ENCODE measurements at regions of chr16 and their contacts with region 1.

Region 1: DNA sequence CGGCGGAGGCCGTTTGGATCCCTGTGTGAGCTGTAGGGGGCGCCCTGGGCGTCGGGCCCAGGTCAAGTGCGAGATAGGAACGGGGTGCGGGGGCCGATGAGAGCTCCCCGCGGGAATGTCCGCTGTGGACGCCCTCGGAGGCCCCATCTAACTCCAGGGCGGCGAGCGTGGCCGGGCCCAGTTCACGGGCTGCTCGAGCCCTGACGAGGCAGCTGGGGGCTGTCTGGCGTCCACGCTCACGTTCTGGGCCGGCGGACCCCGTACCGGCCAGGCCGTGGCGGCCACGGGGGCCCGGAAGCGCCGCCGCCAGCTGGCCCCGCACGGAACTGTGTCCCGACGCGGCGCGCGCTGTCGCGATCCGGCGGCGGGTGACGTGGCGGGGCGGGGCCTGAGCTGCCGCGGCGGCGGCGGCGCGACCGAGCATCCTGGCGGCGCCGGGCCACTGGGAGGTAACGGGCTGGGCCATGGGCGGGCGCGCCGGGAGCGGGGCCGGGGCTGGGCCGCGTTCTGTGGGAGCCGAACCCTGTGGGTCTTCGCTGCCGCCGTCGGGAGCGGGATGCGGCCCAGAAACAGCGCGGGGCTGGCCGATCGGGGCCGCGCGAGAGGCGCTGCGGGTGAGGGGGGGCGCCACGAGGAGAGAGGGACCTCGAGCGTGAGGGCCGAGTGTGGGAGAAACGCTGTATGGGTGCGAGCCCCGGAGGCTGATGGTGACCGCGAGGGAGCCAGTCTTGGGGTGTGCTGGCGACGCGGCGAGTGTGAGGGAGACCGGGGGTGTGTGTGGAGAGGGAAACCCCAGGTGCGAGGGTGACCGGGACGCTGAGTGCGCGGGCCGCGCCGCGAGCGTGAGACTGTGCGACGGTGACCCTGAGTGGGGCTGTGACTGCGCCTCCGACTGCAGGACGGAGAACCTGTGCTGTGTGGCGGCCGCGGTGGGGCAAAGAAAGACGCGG is at the start of gene SLC7A6:
- H3K4me3 ChIP-seq: peak within 1 kb of the TSS; percentile 78
- H3K27ac ChIP-seq: peak within 1 kb of the TSS; percentile 87
- H3K4me1 ChIP-seq: peaks cover 17% of the 10 kb centered on the region
- CTCF ChIP-seq: peak; percentile 98

Region 2: GRCh38 chr16:68227183-68227793 is 37.1 kb before region 1 on chr16:
- CTCF ChIA-PET with region 1: no interaction called
- POLR2A ChIA-PET with region 1: no interaction called
- H3K4me3 ChIP-seq: no peak overlapping the region
- H3K27ac ChIP-seq: no peak overlapping the region
- H3K4me1 ChIP-seq: no peaks in the 10 kb centered on the region
- CTCF ChIP-seq: no peak

Region 3: GRCh38 chr16:68237243-68238028 is 27.0 kb before region 1 on chr16:
- CTCF ChIA-PET with region 1: interaction called, 5 read pairs
- POLR2A ChIA-PET with region 1: interaction called, 12 read pairs
- H3K4me3 ChIP-seq: peak overlapping the region; percentile 40
- H3K27ac ChIP-seq: peak overlapping the region; percentile 75
- H3K4me1 ChIP-seq: peaks cover 7% of the 10 kb centered on the region; the same call in 1 of the 2 replicates
- CTCF ChIP-seq: peak; percentile 14; the same call in 1 of the 2 replicates

Region 4: GRCh38 chr16:68251832-68252231 is 12.6 kb before region 1 on chr16:
- CTCF ChIA-PET with region 1: interaction called, 14 read pairs
- POLR2A ChIA-PET with region 1: no interaction called
- H3K4me3 ChIP-seq: no peak overlapping the region
- H3K27ac ChIP-seq: no peak overlapping the region
- H3K4me1 ChIP-seq: no peaks in the 10 kb centered on the region
- CTCF ChIP-seq: no peak

Region 5: GRCh38 chr16:68298907-68299561 is 34.6 kb after region 1 on chr16:
- CTCF ChIA-PET with region 1: interaction called, 65 read pairs
- POLR2A ChIA-PET with region 1: interaction called, 4 read pairs
- H3K4me3 ChIP-seq: no peak overlapping the region
- H3K27ac ChIP-seq: no peak overlapping the region
- H3K4me1 ChIP-seq: no peaks in the 10 kb centered on the region
- CTCF ChIP-seq: no peak

Region 6: DNA sequence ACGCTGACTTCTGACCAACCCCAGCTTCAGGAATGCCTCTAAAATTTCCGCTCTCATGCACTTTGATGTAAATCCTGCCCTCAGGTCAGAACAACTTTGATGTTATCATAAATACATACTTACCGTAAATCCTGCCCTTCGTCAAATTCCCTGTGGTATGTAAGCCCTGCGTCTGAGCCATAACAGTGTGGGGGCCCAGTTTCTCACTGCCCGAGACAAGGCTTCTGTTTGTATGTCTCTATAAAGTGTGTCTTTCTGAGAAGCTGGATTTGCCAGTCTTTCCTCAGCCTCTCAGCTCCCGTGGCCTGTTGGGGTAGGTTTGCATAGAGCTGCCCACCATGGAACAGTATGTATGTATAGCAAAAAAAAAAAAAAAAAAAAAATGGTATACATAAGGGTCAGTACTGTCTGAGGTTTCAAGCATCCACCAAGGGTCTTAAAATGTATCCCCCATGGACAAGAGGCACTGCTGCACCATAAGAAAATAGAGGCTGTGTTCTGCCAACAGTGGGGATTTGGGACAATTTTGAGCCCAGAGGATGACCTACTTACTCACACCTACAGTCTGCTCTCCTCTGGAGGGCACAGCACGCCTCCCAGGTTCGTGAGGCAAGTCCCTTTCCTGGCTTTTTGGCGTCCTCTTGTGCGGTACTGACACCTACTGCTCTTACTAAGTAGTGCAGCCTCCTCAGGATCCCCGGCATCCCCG is 63.9 kb after region 1 on chr16:
- CTCF ChIA-PET with region 1: interaction called, 151 read pairs
- POLR2A ChIA-PET with region 1: interaction called, 8 read pairs
- H3K4me3 ChIP-seq: no peak overlapping the region
- H3K27ac ChIP-seq: no peak overlapping the region
- H3K4me1 ChIP-seq: peaks cover 3% of the 10 kb centered on the region; the same call in 1 of the 2 replicates
- CTCF ChIP-seq: peak; percentile 90

Measured in HEK293 (cell line).